Sigmoid colon (tissue), 7 donors: ENCODE measurements at regions of chr20 and their contacts with region 1.

Region 1: DNA sequence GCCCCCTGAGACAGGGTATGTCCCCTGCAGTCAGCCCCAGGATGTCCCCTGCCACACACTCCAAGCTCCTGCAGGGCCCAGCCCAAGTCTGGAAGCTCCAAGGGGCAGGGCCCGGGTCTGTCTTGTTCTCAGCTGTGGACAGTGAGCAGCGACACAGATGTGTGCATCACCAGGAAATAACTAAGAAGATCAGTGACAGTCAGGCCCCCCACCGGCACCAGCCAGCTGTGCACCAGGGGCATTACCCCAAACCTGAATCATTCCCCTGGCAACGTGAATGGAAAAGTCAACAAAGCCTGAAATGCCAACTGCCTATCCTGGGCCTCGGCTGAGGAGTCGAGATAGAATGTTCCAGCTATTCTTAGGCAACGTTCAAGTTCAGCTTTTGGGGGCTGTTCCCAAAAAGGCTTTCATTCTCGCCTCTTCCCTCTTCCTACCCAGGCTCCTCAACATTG is 105.0 kb downstream of the PREX1 start:
- DNase-seq: peak; percentile 63
- H3K4me3 ChIP-seq: no peak overlapping the region
- H3K27ac ChIP-seq: peak overlapping the region; percentile 60 to 68 (median 64)
- H3K4me1 ChIP-seq: peaks cover 0 to 24% (median 14%) of the 10 kb centered on the region in 4 donors
- H3K27me3 ChIP-seq: no peaks in the 10 kb centered on the region
- CTCF ChIP-seq: no peak
- EP300 ChIP-seq: no peak
- POLR2A ChIP-seq: no peak

Region 2: GRCh38 chr20:48635433-48636310 is 87.1 kb before region 1 on chr20:
- intact Hi-C with region 1: no loop called
- DNase-seq: no peak
- H3K4me3 ChIP-seq: no peak overlapping the region
- H3K27ac ChIP-seq: no peak overlapping the region
- H3K4me1 ChIP-seq: no peaks in the 10 kb centered on the region
- H3K27me3 ChIP-seq: no peaks in the 10 kb centered on the region
- CTCF ChIP-seq: peak in 2 of 4 experiments; percentile 36 to 49
- EP300 ChIP-seq: no peak
- POLR2A ChIP-seq: no peak

Region 3: GRCh38 chr20:48828022-48828743 is 105.4 kb after region 1 on chr20:
- intact Hi-C with region 1: loop called (anchors 10 kb)
- DNase-seq: peak; percentile 81
- H3K4me3 ChIP-seq: peak overlapping the region; percentile 25 to 61 (median 52)
- H3K27ac ChIP-seq: peak overlapping the region; percentile 58 to 77 (median 70)
- H3K4me1 ChIP-seq: peaks cover 0 to 24% (median 17%) of the 10 kb centered on the region in 4 donors
- H3K27me3 ChIP-seq: peaks cover 0 to 37% (median 21%) of the 10 kb centered on the region in 3 donors
- CTCF ChIP-seq: no peak
- EP300 ChIP-seq: no peak
- POLR2A ChIP-seq: no peak